Mammary epithelial cell (primary cell): ENCODE measurements at regions of chr17 and their contacts with region 1.

Region 1: GRCh38 chr17:10316801-10317542 is 55.8 kb downstream of the MYH13 start:
- DNase-seq: no peak
- H3K4me3 ChIP-seq: no peak overlapping the region
- H3K27ac ChIP-seq: no peak overlapping the region
- H3K4me1 ChIP-seq: no peaks in the 10 kb centered on the region
- H3K27me3 ChIP-seq: no peaks in the 10 kb centered on the region
- CTCF ChIP-seq: peak; percentile 30 to 38

Region 2: GRCh38 chr17:10115071-10115539 is 201.9 kb before region 1 on chr17:
- CTCF ChIA-PET with region 1: no interaction called
- dilution Hi-C with region 1: no loop called
- in situ Hi-C with region 1: loop called in 1 of 2 experiments (anchors 25 kb)
- intact Hi-C with region 1: no loop called
- DNase-seq: peak; percentile 8
- H3K4me3 ChIP-seq: peak overlapping the region in 1 of 3 experiments; percentile 7
- H3K27ac ChIP-seq: peak overlapping the region; percentile 34
- H3K4me1 ChIP-seq: peaks cover 4% of the 10 kb centered on the region
- H3K27me3 ChIP-seq: no peaks in the 10 kb centered on the region
- CTCF ChIP-seq: no peak

Region 3: DNA sequence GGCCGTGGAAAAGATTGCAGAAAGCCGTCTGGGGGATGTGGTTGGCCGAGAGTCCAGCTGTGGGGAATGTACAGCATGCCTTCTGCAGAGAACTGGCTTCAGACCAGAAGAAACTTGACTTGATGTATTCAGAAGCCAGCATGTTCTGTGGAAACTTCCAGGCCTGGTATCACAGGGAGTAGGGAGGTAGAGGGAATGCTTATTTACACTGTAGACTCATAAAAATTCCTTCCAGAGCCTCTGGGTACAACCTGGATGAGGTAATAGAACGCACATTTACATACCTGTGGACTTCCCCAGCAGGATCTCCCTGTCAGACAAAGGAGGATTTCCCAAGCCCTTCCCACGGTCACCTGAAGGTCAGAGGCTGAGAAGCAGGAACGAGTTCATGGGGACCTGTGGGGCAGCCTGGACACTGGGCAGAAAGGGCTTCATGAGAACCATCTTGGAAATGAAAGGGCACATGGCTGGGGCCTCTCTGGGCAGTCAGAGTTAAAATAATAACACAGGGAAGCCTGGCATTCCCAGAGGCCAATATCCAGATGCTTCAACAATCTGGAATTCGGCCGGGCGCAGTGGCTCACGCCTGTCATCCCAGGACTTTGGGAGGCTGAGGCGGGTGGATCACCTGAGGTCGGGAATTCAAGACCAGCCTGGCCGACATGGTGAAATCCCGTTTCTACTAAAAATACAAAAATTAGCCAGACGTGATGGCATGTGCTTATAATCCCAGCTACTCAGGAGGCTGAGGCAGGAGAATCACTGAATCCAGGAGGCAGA is 106.6 kb before region 1 on chr17:
- CTCF ChIA-PET with region 1: no interaction called
- dilution Hi-C with region 1: no loop called
- in situ Hi-C with region 1: loop called in 1 of 2 experiments (anchors 25 kb)
- intact Hi-C with region 1: no loop called
- DNase-seq: peak; percentile 21
- H3K4me3 ChIP-seq: no peak overlapping the region
- H3K27ac ChIP-seq: no peak overlapping the region
- H3K4me1 ChIP-seq: no peaks in the 10 kb centered on the region
- H3K27me3 ChIP-seq: no peaks in the 10 kb centered on the region
- CTCF ChIP-seq: no peak

Region 4: DNA sequence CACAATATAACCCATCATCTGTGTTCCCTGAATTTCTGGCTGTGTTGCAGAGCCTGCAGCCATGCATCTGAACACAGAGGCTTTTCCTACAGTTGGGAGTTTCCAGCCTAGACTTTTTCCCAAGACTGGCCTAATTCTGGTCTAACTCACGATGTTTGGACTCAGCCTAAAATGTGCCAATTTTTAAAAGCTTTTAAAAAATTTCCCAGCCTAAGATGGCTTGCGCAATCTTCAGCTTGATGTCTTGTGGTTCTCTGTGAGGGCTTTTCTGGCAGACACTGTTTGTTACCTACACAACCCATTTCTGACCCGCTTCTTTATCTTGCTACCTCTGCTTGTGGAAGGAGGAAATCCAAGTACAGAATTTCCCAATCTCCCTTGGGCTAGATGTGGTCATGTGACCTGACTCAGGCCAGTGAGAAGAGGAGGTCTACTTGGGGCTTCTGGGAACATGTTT is 45.8 kb before region 1 on chr17:
- CTCF ChIA-PET with region 1: no interaction called
- dilution Hi-C with region 1: no loop called
- in situ Hi-C with region 1: no loop called
- intact Hi-C with region 1: no loop called
- DNase-seq: no peak
- H3K4me3 ChIP-seq: no peak overlapping the region
- H3K27ac ChIP-seq: no peak overlapping the region
- H3K4me1 ChIP-seq: no peaks in the 10 kb centered on the region
- H3K27me3 ChIP-seq: no peaks in the 10 kb centered on the region
- CTCF ChIP-seq: no peak

Region 5: DNA sequence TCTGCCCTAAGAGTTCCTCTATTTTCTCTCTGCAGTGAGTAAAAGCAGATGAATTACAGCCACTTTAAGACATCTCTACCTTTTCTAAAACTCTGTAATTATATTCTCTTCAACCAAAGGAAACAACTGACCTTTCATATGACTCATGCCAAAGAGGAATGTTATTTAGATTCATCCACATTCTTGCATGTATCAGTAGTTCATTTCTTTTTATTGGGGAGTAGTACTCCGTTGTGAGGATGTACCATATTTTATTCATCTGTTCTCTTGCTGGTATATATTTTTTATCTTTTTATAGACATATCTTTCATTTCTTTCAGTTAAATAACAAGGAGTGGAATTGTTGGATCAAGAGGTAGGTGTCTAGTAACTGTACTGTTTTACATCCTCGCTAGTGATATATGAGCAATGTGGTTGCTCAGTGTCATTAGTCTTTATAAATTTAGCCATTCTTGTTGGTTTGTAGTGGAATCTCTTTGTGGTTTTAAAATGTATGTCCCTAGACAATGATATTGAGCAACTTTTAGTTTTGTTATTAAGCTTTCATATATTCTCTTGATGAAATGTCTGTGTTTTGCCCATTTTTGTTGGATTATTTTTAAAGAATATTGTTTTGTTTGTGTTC is 112.6 kb after region 1 on chr17:
- CTCF ChIA-PET with region 1: no interaction called
- dilution Hi-C with region 1: no loop called
- in situ Hi-C with region 1: no loop called
- intact Hi-C with region 1: no loop called
- DNase-seq: no peak
- H3K4me3 ChIP-seq: no peak overlapping the region
- H3K27ac ChIP-seq: no peak overlapping the region
- H3K4me1 ChIP-seq: no peaks in the 10 kb centered on the region
- H3K27me3 ChIP-seq: no peaks in the 10 kb centered on the region
- CTCF ChIP-seq: no peak